GM10248 (cell line): ENCODE measurements at regions of chr17 and their contacts with region 1.

Region 1: DNA sequence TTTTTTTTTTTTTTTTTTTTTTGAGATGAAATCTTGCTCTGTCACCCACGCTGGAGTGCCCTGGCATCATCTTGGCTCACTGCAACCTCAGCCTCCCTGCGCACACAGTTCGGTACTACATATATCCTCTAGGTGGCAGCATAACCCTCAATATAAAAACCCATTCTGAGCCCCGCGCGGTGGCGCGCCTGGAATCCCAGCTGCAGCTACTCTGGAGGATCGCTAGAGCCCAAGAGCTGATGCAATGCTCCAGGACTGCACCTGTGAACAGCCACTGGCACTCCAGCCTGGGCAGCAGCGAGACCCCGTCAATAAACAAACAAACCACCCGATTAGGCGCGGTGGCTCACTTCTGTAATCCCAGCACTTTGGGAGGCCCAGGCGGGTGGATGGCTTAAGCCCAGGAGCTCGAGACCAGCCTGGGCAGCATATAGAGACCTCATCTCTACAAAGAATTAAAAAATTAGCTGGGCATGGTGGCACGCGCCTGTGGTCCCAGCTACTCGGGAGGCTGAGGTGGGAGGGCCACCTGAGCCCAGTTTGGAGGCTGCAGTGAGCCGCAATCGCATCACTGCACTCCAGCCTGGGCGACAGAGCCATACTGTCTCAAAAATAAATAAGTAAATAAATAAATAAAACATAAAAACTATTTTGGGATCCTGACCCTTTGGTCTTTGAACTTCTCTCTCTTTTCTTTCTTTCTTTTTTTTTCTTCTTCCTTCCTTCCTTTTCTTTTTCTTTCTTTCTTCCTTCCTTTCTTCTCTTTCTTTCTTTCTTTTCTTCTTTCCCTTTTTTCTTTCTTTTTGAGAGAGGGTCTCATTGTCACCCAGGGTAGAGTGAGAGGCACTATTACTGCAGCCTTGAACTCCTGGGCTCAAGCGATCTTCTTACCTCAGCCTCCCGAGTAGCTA is 15.4 kb upstream of the AKAP10 start:
- DNase-seq: peak; percentile 72
- CTCF ChIP-seq: peak; percentile 79

Region 2: GRCh38 chr17:19686400-19687090 is 306.5 kb before region 1 on chr17:
- CTCF ChIA-PET with region 1: no interaction called
- POLR2A ChIA-PET with region 1: interaction called, 10 read pairs
- DNase-seq: no peak
- CTCF ChIP-seq: no peak

Region 3: DNA sequence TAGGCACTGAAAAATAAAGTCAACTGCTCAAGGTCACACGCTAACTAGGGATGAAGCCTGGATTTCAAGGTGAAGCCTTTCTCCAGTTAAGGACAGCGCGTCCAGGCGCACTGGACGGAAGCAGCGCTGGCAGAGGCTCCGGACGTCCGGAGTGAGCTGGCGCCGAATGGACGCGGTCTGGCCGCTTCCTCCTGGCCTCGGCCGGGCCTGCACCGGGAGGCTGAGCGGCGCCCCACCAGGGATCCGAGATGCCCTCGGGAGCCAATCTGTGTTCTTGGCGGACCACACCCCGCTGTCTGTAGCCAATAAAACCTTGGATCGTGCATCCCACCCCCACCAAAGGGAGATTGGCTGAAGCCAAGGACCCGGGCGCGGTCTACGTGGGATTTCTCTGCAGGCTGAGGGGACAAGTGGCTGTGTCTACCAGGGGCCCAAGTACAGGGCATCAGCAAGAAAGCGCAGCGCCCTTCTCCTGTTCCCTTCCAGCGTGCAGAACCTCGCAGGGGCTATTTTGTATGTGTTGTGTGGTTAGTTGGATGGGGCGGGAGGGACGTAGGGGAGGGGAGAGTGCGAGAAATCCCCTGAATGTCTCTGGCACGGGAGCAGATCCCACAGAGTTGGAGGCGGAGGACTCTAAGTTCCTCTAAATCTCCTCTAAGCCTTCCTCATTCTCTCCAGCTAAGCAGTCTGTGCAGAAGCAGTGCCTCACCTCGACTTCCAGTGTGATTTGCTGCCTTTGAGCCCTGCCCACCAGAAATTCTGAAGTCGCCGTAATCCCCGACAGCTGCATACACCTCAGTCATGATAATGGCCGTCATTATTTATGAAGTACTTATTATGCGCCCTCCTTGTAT is 12.9 kb before region 1 on chr17:
- CTCF ChIA-PET with region 1: interaction called, 40 read pairs
- POLR2A ChIA-PET with region 1: no interaction called
- DNase-seq: no peak
- CTCF ChIP-seq: no peak

Region 4: DNA sequence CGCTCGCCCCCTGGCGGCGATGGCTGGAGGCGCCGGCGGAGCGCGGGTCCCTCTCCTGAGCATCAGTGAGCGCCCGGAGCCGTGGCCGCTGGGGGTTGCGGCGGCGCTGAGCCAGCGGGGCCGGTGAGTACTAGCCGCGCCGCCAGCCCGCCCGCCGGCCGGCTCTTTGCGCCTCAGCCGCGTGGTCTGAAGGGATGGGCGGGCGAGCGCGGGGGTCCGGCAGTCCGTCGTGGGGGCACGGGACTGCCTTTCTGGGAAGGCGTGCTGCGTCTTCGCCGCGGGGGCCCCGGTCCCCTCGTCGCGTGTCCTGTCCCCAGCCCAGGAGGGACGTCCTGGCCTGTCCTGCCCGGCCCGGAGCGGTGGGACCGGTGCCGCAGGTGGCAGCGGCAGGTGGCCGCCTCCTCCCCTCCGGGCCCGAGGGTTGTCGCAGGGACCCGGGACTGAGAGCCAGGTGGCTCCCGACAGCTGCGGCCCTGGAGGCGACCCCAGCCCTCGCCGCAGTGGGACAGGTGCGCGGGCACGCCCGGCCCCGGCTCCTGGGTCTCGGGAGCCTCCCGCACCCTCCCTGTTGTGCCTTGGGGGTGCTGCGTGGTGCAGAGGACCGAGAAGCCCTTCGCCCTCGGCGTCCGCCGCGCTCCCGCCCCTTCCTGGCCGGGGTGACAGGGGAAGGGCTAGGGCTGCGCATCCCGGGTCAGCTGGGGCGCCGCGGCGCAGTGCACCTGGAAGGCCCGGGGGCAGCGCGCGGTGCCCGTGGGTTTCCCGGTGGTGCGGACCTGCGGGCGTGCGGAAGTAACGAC is 16.4 kb after region 1 on chr17 and contains the start of gene SPECC1:
- CTCF ChIA-PET with region 1: interaction called, 38 read pairs
- POLR2A ChIA-PET with region 1: no interaction called
- DNase-seq: peak; percentile 93
- CTCF ChIP-seq: peak; percentile 91

Region 5: DNA sequence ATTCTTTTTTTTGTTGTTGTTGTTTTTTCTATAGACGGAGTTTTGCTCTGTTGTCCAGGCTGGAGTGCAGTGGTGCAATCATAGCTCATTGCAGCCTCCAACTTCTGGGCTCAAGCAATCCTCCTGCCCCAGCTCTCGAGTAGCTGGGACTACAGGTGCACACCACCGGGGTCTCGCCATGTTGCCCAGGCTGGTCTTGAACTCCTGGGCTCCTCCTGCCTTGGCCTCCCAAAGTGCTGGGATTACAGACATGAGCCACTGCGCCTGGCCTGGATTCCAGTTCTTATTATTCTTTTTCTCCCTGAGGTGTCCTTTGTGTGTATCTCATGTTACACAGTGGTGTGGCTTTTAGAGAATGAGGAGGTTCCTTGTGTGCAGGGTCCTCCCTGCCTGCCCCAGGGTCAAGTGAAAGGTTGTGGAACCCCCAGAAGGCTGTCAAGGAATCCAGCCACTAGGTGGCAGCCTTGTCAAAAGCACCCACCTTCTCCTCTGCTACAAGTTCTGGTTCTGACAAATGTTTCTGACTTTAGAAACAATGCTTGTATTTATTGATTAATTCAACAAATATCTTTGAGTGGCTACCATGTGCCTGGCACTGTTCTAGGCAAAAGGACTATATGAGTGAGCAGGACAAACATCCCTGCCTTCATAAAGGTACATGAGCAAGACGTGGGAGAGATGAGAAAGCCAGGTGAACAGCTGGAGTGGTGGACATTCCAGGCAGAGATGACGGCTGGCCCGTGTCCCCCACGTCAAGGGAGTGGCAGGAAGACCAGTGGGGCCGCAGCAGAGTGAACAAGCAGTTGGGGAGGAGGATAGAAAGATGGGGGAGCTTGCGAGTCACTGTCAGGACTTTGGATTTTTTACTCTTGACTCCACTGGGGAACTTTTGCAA is 128.5 kb after region 1 on chr17:
- CTCF ChIA-PET with region 1: interaction called, 70 read pairs
- POLR2A ChIA-PET with region 1: no interaction called
- DNase-seq: peak; percentile 76
- CTCF ChIP-seq: peak; percentile 79

Region 6: DNA sequence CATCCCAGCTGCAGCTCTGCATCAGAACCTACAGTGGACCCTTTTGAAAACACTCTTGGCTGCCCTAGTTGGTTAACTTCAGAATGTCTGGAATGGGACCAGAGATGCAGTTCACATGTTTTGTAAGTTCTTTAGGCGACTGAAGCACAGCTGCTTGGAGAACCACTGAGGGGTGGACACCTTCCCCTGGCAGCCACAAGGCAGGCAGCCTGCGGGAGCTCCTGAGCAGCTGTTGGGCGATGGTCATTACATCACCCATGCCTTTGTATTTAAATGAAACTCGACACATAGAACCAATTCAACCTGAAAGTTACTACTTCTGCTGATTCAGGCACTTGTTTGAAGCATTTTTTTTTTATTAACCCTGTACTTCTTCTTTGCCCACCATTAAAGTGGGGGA is 322.8 kb after region 1 on chr17:
- CTCF ChIA-PET with region 1: interaction called, 10 read pairs
- POLR2A ChIA-PET with region 1: no interaction called
- DNase-seq: no peak
- CTCF ChIP-seq: no peak